ENCODE measurements at regions of chr22 and their contacts with region 1.

Region 1: DNA sequence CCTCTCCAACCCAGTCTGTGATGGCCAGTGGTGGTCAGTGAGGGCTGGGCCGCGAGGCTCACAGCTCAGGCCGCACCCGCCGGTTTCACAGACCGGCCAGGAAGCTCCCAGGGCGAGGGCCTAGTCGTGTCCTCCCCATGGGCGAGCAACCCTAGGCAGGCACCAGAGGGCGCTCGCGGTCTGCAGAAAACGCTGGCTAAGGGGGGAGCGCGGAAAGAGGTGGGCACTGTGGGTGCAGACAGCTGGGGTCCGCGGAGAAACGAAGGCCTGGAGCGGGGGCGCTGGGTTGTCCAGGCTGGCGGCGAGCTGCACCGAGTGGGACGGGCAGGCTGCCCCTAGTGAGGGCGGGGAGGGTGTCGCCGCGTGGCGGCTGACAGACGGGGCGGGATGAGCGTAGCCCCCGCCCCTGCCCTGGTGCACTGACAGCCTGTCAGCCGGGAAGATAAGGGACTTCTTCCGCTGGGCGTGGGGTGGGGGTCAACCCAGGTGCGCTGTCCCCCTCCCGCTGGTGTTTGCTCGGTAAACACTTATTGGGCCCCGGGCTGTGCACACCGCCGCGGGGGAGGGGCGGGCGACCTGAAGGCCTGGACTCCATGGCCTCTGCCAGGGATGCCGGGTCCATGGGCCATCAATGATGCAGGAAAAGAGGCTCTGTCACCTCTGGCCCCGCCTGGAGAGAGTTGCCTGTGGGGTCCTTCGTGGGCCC is 7.5 kb downstream of the GP1BB start:
- DNase-seq: peak; percentile 83
- H3K4me3 ChIP-seq: peak overlapping the region; percentile 63
- H3K27ac ChIP-seq: no peak overlapping the region
- H3K4me1 ChIP-seq: peaks cover 6% of the 10 kb centered on the region
- CTCF ChIP-seq: peak; percentile 96

Region 2: GRCh38 chr22:19772422-19773324 is 41.9 kb after region 1 on chr22:
- CTCF ChIA-PET with region 1: no interaction called
- POLR2A ChIA-PET with region 1: interaction called, 8 read pairs
- intact Hi-C with region 1: loop called (anchors 2 kb)
- DNase-seq: peak; percentile 98
- H3K4me3 ChIP-seq: peak overlapping the region; percentile 60
- H3K27ac ChIP-seq: peak overlapping the region; percentile 81
- H3K4me1 ChIP-seq: peaks cover 53% of the 10 kb centered on the region
- CTCF ChIP-seq: peak; percentile 72

Region 3: DNA sequence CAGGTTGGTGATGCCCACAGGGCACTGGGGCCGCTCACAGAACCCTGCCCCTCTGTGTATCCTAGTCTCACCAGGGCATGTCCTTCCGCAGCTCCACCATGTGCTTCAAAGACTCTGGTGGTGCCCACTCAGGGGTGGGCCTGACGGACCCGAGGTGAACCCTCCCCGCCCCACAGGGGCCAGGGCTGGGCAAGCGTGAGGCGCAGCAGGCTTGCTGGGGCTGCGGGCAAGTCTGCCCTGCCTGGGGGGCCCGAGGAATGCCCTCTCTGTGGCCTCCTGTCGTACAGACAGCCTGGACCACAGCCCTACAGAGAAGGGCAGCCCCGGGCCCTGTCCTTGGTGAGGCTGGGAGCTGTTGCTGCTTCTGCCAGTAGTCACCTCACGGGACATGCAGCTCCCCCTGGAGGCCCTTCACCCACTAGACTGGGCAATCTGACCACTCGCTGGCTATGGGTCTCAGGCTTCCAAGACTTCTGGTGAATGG is 70.0 kb after region 1 on chr22:
- CTCF ChIA-PET with region 1: no interaction called
- POLR2A ChIA-PET with region 1: no interaction called
- intact Hi-C with region 1: no loop called
- DNase-seq: no peak
- H3K4me3 ChIP-seq: no peak overlapping the region
- H3K27ac ChIP-seq: no peak overlapping the region
- H3K4me1 ChIP-seq: no peaks in the 10 kb centered on the region
- CTCF ChIP-seq: no peak

Region 4: DNA sequence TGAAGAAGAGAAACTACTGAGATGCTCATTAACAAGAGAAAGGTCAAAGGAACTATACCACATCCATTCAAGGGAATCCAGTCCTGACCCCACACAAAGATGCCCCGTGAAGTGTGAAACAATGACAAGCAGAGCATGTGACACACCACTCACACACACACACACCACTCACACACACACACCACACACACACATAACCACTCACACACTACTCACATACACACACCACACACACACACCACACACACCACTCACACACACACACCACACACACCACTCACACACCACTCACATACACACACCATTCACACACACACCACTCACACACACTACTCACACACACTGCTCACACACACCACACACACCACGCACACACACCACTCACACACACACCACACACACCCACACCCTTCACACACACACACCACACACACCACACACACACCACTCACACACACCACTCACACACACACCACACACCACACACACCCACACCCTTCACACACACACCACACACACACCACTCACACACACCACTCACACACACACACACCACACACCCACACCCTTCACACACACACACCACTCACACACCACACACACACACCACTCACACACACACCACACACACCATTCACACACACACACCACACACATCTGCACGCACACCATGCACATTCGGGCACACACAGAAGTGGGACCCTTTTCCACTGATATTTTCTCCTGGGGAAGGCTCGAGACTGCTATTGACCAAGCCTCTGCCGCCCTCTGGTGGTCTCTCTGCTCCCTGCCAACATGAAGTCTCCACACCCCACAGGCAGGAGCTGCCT is 178.8 kb after region 1 on chr22:
- CTCF ChIA-PET with region 1: interaction called, 4 read pairs
- POLR2A ChIA-PET with region 1: no interaction called
- intact Hi-C with region 1: loop called (anchors 1 kb)
- DNase-seq: peak; percentile 89
- H3K4me3 ChIP-seq: no peak overlapping the region
- H3K27ac ChIP-seq: no peak overlapping the region
- H3K4me1 ChIP-seq: peaks cover 9% of the 10 kb centered on the region
- CTCF ChIP-seq: peak; percentile 97

Region 5: GRCh38 chr22:19955241-19956128 is 224.7 kb after region 1 on chr22:
- CTCF ChIA-PET with region 1: no interaction called
- POLR2A ChIA-PET with region 1: no interaction called
- intact Hi-C with region 1: loop called (anchors 1 kb)
- DNase-seq: no peak
- H3K4me3 ChIP-seq: no peak overlapping the region
- H3K27ac ChIP-seq: no peak overlapping the region
- H3K4me1 ChIP-seq: peaks cover 8% of the 10 kb centered on the region
- CTCF ChIP-seq: no peak

Region 6: DNA sequence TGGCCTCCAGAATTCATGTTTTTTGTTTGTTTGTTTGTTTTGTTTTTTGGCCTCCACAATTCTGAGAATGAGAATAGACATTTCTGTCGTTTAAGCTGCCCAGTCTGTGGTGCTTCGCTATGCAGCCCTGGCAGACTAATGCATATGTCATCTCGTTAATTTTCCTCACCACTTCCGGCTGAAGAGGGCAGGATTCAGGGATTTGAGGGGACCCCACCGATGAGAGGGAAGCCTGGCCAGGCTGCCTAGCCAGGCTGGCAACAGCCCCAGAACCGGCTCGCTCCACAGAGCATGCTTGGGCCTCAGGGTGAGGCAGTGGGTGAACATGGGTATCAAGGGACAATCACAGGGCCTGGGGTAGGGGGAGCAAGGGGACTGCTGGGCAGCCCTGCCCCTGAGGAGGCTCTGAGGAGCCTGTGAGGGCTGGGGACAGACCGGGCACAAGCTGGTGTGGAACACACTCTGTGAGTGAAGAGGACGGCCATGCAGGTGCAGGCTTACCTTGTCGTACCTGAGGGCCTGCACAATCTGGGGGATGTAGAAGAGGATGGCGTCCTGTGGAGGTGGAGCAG is 995.3 kb after region 1 on chr22:
- CTCF ChIA-PET with region 1: no interaction called
- POLR2A ChIA-PET with region 1: no interaction called
- intact Hi-C with region 1: no loop called
- DNase-seq: no peak
- H3K4me3 ChIP-seq: no peak overlapping the region
- H3K27ac ChIP-seq: no peak overlapping the region
- H3K4me1 ChIP-seq: no peaks in the 10 kb centered on the region
- CTCF ChIP-seq: no peak